CD14-positive monocyte (primary cell): ENCODE measurements at regions of chr19 and their contacts with region 1.

Region 1: GRCh38 chr19:1478934-1479707 is at the start of gene C19orf25:
- DNase-seq: peak; percentile 89 to 91 (median 90)
- H3K4me3 ChIP-seq: peak within 1 kb of the TSS; percentile 68 to 76 (median 70)
- H3K4me3 Mint-ChIP-seq: peak within 1 kb of the TSS; percentile 93 to 98
- H3K27ac ChIP-seq: peak within 1 kb of the TSS; percentile 51 to 86
- H3K27ac Mint-ChIP-seq: peak within 1 kb of the TSS; percentile 93 to 99 (median 97)
- H3K4me1 ChIP-seq: peaks cover 20 to 28% of the 10 kb centered on the region in 2 donors
- H3K4me1 Mint-ChIP-seq: peaks cover 28% of the 10 kb centered on the region
- H3K27me3 ChIP-seq: no peaks in the 10 kb centered on the region
- H3K27me3 Mint-ChIP-seq: peaks cover 3 to 6% (median 5%) of the 10 kb centered on the region in 3 donors
- CTCF ChIP-seq: no peak
- polyA plus RNA-seq, gene C19orf25: 18.2 to 20.9 (median 19.9) TPM

Region 2: DNA sequence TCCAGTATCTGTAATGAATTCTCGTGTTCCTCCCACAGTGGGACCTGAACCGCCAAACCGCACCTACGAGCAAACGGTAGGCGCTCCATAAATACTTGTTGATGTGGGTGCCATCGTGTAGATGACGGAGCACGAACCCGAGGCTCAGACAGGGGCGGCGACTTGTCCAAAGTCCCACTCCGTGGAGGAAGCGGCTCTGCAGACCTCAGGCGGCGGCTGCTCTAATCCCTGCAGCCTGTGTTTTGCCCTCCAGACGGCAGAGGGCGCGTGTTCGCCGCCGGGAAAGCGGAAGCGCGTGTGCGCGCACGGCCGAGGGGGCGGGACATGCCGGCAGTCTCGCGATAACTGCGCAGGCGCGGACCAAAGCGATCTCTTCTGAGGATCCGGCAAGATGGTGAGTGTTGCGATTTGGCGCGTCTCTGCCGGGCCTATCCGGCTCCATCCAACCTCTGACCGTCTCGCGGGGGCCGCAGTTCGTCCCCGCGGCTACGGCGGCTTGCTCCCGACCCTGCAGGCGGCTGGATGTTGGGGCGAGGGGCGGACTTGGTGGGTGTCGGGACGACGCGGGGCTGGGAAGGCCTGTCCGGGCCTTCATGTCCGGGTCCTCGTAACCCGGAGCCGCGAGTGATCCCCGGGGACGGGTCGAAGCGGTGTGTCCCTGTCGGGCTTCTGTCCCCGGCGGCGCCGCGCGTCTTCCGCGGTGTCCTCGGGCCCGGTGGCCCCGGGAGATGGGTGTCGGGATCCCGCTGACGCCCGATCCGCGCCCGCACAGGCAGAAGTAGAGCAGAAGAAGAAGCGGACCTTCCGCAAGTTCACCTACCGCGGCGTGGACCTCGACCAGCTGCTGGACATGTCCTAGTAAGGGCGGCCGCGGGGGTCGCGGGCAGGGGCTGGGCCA is 40.8 kb before region 1 on chr19 and contains the start of gene RPS15:
- intact Hi-C with region 1: loop called (anchors 1 to 5 kb)
- DNase-seq: peak; percentile 89 to 96 (median 96)
- H3K4me3 ChIP-seq: peak within 1 kb of the TSS; percentile 52 to 93 (median 82)
- H3K4me3 Mint-ChIP-seq: peak within 1 kb of the TSS; percentile 89 to 95
- H3K27ac ChIP-seq: peak within 1 kb of the TSS; percentile 85 to 88
- H3K27ac Mint-ChIP-seq: peak within 1 kb of the TSS; percentile 95 to 99 (median 99)
- H3K4me1 ChIP-seq: peaks cover 13 to 22% of the 10 kb centered on the region in 2 donors
- H3K4me1 Mint-ChIP-seq: peaks cover 27% of the 10 kb centered on the region
- H3K27me3 ChIP-seq: no peaks in the 10 kb centered on the region
- H3K27me3 Mint-ChIP-seq: peaks cover 0 to 4% (median 1%) of the 10 kb centered on the region in 3 donors
- CTCF ChIP-seq: peak; percentile 97
- polyA plus RNA-seq, gene RPS15: 1,318 to 3,451 (median 1,526) TPM

Region 3: GRCh38 chr19:1445185-1445931 is 33.8 kb before region 1 on chr19:
- intact Hi-C with region 1: loop called in 1 of 2 experiments (anchors 5 kb)
- DNase-seq: peak; percentile 39 to 61 (median 59)
- H3K4me3 ChIP-seq: peak overlapping the region; percentile 1 to 74 (median 37)
- H3K4me3 Mint-ChIP-seq: peak overlapping the region; percentile 69 to 87
- H3K27ac ChIP-seq: no peak overlapping the region
- H3K27ac Mint-ChIP-seq: no peak overlapping the region
- H3K4me1 ChIP-seq: peaks cover 14 to 32% of the 10 kb centered on the region in 2 donors
- H3K4me1 Mint-ChIP-seq: peaks cover 20% of the 10 kb centered on the region
- H3K27me3 ChIP-seq: peaks cover 33 to 53% of the 10 kb centered on the region in 2 donors
- H3K27me3 Mint-ChIP-seq: peaks cover 40 to 65% (median 44%) of the 10 kb centered on the region in 3 donors
- CTCF ChIP-seq: peak; percentile 96